K562 (cell line): ENCODE measurements at regions of chrX and their contacts with region 1.

Region 1: DNA sequence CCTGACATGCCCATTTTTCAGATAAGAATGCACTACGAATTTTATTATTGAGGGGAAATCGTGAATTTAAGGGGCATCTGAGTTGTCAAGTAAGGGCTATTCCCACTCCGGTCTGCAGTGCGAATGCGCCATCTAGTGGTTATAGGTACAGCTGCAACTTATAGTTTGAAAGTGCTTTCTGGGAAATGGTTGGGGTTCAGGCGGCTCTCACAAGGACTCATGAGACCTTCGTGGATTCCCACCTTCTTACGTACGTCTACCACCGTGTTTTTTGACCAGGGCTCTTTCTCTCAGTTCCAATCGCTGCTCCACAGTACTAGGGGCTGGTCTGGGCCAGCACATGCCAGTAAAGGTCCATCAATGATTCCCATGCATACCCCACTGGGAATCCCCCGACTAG is 12.3 kb downstream of the MSL3 start:
- DNase-seq: peak; percentile 64 to 70 (median 66)
- ATAC-seq: peak; percentile 97
- H3K4me3 ChIP-seq: no peak overlapping the region
- H3K27ac ChIP-seq: no peak overlapping the region
- H3K4me1 ChIP-seq: peaks cover 0 to 3% of the 10 kb centered on the region in 2 experiments; a peak in 2 of 5 replicates
- H3K27me3 ChIP-seq: no peaks in the 10 kb centered on the region
- CTCF ChIP-seq: peak; percentile 82 to 93 (median 89)
- EP300 ChIP-seq: no peak
- POLR2A ChIP-seq: no peak
- RAD21 ChIP-seq: peak; percentile 80 to 84

Region 2: GRCh38 chrX:11137543-11138139 is 632.7 kb before region 1 on chrX:
- CTCF ChIA-PET with region 1: no interaction called
- POLR2A ChIA-PET with region 1: no interaction called
- in situ Hi-C with region 1: no loop called
- intact Hi-C with region 1: loop called (anchors 5 kb)
- DNase-seq: peak in 1 of 4 experiments; percentile 46
- ATAC-seq: no peak
- H3K4me3 ChIP-seq: no peak overlapping the region
- H3K27ac ChIP-seq: no peak overlapping the region
- H3K4me1 ChIP-seq: peaks cover 0 to 14% of the 10 kb centered on the region in 2 experiments; a peak in 2 of 5 replicates
- H3K27me3 ChIP-seq: no peaks in the 10 kb centered on the region
- CTCF ChIP-seq: peak in 2 of 3 experiments; percentile 24 to 62; a peak in 4 of 6 replicates
- EP300 ChIP-seq: no peak
- POLR2A ChIP-seq: no peak
- RAD21 ChIP-seq: peak; percentile 40; a peak in 3 of 4 replicates

Region 3: DNA sequence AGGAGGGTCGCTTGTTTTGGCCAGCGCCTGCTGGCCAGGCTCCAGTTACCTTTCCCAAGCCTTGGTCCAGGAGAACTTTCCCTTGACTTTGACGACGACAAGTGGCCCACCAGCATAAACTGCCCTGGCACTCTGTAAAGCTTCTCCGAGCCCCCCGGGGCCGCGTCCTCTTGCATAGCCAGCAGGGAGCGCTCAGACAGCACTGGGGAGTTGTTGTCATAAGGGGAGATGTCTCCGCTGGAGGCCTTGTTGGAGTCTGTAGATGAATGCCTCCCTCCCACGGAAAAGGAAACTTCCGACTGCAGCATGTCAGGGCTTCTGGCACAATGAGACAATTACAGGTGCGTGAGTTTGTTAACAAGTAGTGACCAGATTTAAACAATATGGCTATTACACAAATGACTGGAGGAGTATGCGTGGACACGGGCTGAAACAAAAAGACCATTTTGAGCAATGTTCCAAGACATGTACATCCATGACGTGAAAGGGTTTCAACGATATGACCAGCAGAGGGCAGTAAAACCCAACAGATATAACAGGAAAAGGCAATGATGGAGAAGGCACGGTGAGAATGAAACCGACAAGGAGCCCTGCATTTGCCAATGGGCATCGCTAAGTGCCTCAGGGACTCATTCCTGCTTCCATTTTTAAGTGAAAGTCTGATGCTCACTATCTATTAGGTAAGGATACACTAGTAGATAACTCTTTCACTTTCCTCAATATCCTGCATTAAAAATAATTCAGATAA is 626.2 kb before region 1 on chrX:
- CTCF ChIA-PET with region 1: interaction called, 3 read pairs
- POLR2A ChIA-PET with region 1: no interaction called
- in situ Hi-C with region 1: loop called (anchors 5 kb)
- intact Hi-C with region 1: loop called (anchors 5 kb)
- DNase-seq: peak; percentile 39 to 81 (median 53)
- ATAC-seq: peak; percentile 93
- H3K4me3 ChIP-seq: no peak overlapping the region
- H3K27ac ChIP-seq: no peak overlapping the region
- H3K4me1 ChIP-seq: no peaks in the 10 kb centered on the region; a peak in 2 of 5 replicates
- H3K27me3 ChIP-seq: no peaks in the 10 kb centered on the region
- CTCF ChIP-seq: peak; percentile 48 to 74 (median 65); a peak in 5 of 6 replicates
- EP300 ChIP-seq: no peak
- POLR2A ChIP-seq: no peak
- RAD21 ChIP-seq: peak; percentile 71 to 78

Region 4: GRCh38 chrX:11724122-11725017 is 46.0 kb before region 1 on chrX:
- CTCF ChIA-PET with region 1: no interaction called
- POLR2A ChIA-PET with region 1: no interaction called
- in situ Hi-C with region 1: no loop called
- intact Hi-C with region 1: loop called (anchors 2 kb)
- DNase-seq: peak; percentile 25 to 35 (median 31)
- ATAC-seq: peak; percentile 71
- H3K4me3 ChIP-seq: no peak overlapping the region
- H3K27ac ChIP-seq: no peak overlapping the region
- H3K4me1 ChIP-seq: no peaks in the 10 kb centered on the region
- H3K27me3 ChIP-seq: peaks cover 0 to 4% of the 10 kb centered on the region in 2 experiments; a peak in 1 of 5 replicates
- CTCF ChIP-seq: peak; percentile 56 to 74 (median 58); a peak in 5 of 6 replicates
- EP300 ChIP-seq: no peak
- POLR2A ChIP-seq: no peak
- RAD21 ChIP-seq: peak; percentile 60 to 67